Transverse colon (tissue), 4 donors: ENCODE measurements at regions of chr3 and their contacts with region 1.

Region 1: GRCh38 chr3:132730891-132731580 is 8.8 kb upstream of the NPHP3 start:
- DNase-seq: no peak
- H3K4me3 ChIP-seq: no peak overlapping the region
- H3K27ac ChIP-seq: no peak overlapping the region
- H3K4me1 ChIP-seq: no peaks in the 10 kb centered on the region
- H3K27me3 ChIP-seq: peaks cover 9% of the 10 kb centered on the region
- CTCF ChIP-seq: peak in 3 of 5 experiments; percentile 10 to 21 (median 19)
- EP300 ChIP-seq: no peak
- POLR2A ChIP-seq: no peak

Region 2: GRCh38 chr3:133040696-133041523 is 309.9 kb after region 1 on chr3:
- in situ Hi-C with region 1: loop called (anchors 25 kb)
- intact Hi-C with region 1: no loop called
- DNase-seq: peak; percentile 61
- H3K4me3 ChIP-seq: no peak overlapping the region
- H3K27ac ChIP-seq: no peak overlapping the region
- H3K4me1 ChIP-seq: peaks cover 0 to 9% (median 7%) of the 10 kb centered on the region in 4 donors
- H3K27me3 ChIP-seq: peaks cover 35% of the 10 kb centered on the region
- CTCF ChIP-seq: peak; percentile 43 to 64 (median 55)
- EP300 ChIP-seq: no peak
- POLR2A ChIP-seq: no peak

Region 3: GRCh38 chr3:133384331-133385027 is 653.4 kb after region 1 on chr3:
- in situ Hi-C with region 1: loop called in 3 of 4 experiments (anchors 10 to 25 kb)
- intact Hi-C with region 1: no loop called
- DNase-seq: peak; percentile 25
- H3K4me3 ChIP-seq: no peak overlapping the region
- H3K27ac ChIP-seq: no peak overlapping the region
- H3K4me1 ChIP-seq: no peaks in the 10 kb centered on the region
- H3K27me3 ChIP-seq: no peaks in the 10 kb centered on the region
- CTCF ChIP-seq: peak; percentile 43 to 53 (median 46)
- EP300 ChIP-seq: no peak
- POLR2A ChIP-seq: no peak

Region 4: DNA sequence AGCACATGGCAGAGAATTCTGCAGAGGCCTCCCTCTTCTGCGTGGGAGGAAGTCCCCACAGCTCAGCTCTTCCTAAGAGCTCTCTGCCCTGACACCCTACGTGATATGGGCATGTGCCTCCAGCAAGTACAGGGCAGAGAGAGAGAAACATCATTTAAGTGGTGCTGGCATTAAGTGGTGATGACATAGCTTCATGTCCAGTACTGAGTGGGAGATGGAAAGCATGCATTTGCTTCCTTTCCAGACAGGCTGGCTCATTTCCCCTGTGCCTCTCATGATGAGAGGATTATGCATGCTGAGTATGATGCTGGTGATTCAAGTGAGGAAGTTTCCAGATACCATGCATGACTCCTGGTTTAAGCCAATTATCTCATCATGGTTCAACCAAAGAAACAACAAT is 695.7 kb after region 1 on chr3:
- in situ Hi-C with region 1: loop called in 2 of 4 experiments (anchors 5 to 10 kb)
- intact Hi-C with region 1: no loop called
- DNase-seq: no peak
- H3K4me3 ChIP-seq: no peak overlapping the region
- H3K27ac ChIP-seq: no peak overlapping the region
- H3K4me1 ChIP-seq: peaks cover 0 to 5% (median 4%) of the 10 kb centered on the region in 4 donors
- H3K27me3 ChIP-seq: peaks cover 19% of the 10 kb centered on the region
- CTCF ChIP-seq: no peak
- EP300 ChIP-seq: no peak
- POLR2A ChIP-seq: no peak

Region 5: DNA sequence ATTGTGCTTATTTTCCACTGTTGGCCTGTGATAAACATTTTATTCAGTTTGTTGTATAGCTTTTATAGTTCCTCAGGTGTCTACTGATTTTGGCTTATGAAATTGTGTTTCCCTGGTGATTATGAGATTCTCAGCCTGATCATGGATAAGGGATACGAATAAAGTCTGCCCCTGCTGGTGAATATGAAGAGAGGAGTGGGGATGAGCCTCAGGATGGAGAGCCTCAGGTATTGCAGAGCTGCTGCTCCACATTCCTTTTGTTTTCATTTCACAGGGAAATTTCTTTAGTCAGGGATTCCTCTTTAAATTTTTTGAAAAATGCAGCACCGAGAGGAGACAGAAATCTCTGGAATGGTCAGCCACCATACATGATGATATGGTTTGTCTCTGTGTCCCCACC is 1179.4 kb after region 1 on chr3:
- in situ Hi-C with region 1: loop called in 1 of 4 experiments (anchors 25 kb)
- intact Hi-C with region 1: no loop called
- DNase-seq: no peak
- H3K4me3 ChIP-seq: no peak overlapping the region
- H3K27ac ChIP-seq: no peak overlapping the region
- H3K4me1 ChIP-seq: no peaks in the 10 kb centered on the region
- H3K27me3 ChIP-seq: peaks cover 11% of the 10 kb centered on the region
- CTCF ChIP-seq: no peak
- EP300 ChIP-seq: no peak
- POLR2A ChIP-seq: no peak

Region 6: DNA sequence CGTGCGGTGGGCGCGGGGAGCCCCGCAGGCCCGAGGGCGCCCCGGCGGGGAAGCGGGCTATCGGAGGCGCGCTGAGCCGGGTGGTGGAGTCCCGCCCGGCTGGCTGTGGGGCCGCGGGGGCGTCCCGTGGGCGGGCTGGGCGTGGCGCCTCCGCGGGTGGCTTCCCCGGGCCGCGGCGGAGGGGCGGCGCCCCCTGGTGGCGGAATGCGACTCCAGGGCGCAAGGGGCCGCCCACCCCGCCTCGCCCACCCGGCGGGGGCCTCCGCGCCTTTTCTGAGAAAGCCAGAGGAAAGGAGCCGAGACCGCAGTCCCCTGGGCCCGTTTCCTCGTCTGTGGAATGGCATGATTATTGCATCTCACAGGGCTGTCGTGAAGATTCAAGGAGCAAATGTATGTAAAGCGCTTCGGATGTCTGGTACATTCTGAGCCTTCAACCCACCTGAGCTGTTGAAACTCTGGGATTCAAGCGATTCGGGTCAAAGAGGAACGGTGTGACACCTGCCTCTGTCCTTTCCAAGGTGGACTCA is 1196.6 kb after region 1 on chr3:
- in situ Hi-C with region 1: loop called in 3 of 4 experiments (anchors 25 kb)
- intact Hi-C with region 1: no loop called
- DNase-seq: peak; percentile 63
- H3K4me3 ChIP-seq: peak overlapping the region; percentile 18 to 46 (median 41)
- H3K27ac ChIP-seq: no peak overlapping the region
- H3K4me1 ChIP-seq: peaks cover 4 to 7% (median 6%) of the 10 kb centered on the region in 4 donors
- H3K27me3 ChIP-seq: no peaks in the 10 kb centered on the region
- CTCF ChIP-seq: peak; percentile 28 to 80 (median 66)
- EP300 ChIP-seq: no peak
- POLR2A ChIP-seq: no peak